Caco-2 (cell line): ENCODE measurements at regions of chr12 and their contacts with region 1.

Region 1: GRCh38 chr12:55073043-55074022 is 52.9 kb upstream of the OR9K2 start:
- DNase-seq: peak; percentile 58 to 69
- H3K4me3 ChIP-seq: no peak overlapping the region
- H3K4me3 Mint-ChIP-seq: no peak overlapping the region
- H3K27ac Mint-ChIP-seq: no peak overlapping the region
- H3K4me1 ChIP-seq: no peaks in the 10 kb centered on the region
- H3K4me1 Mint-ChIP-seq: no peaks in the 10 kb centered on the region
- H3K27me3 ChIP-seq: no peaks in the 10 kb centered on the region
- H3K27me3 Mint-ChIP-seq: peaks cover 10% of the 10 kb centered on the region
- CTCF ChIP-seq: peak; percentile 68 to 75

Region 2: GRCh38 chr12:54661048-54661447 is 412.3 kb before region 1 on chr12:
- CTCF ChIA-PET with region 1: no interaction called
- POLR2A ChIA-PET with region 1: no interaction called
- intact Hi-C with region 1: no loop called
- DNase-seq: no peak
- H3K4me3 ChIP-seq: no peak overlapping the region
- H3K4me3 Mint-ChIP-seq: no peak overlapping the region
- H3K27ac Mint-ChIP-seq: no peak overlapping the region
- H3K4me1 ChIP-seq: no peaks in the 10 kb centered on the region
- H3K4me1 Mint-ChIP-seq: no peaks in the 10 kb centered on the region
- H3K27me3 ChIP-seq: no peaks in the 10 kb centered on the region; the same call in 1 of the 2 replicates
- H3K27me3 Mint-ChIP-seq: peaks cover 21% of the 10 kb centered on the region
- CTCF ChIP-seq: no peak

Region 3: DNA sequence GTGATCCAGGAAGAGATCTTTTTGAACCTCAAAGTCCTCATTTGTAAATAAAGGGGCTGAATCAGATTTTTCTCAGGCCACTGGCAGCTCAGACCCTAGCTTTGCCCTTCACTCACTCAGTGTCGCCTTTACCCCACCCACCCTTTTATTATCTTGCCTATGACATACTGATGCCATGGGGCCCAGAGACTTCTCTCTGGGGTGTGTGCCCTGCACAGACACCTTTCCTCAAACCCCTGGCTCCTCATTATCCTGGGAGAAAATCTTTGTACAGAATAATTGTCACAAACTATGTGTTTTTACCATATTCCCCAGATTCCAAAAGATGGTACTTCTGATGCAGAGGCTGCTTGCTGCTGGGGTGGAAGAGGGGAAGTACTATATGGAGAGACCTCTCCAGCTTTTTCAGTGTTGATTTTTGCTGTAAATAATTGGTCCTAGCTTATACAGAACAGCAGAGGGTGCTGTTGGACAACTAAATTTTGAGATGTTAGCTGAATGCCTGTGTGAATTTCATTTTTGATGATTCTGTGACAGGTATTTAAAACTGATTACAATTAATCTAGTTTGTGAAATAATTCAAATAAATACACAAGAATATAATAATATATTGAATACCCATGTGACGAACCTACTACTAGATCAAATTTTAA is 371.3 kb before region 1 on chr12:
- CTCF ChIA-PET with region 1: interaction called, 8 read pairs
- POLR2A ChIA-PET with region 1: no interaction called
- intact Hi-C with region 1: loop called (anchors 5 kb)
- DNase-seq: peak in 1 of 2 experiments; percentile 22
- H3K4me3 ChIP-seq: no peak overlapping the region
- H3K4me3 Mint-ChIP-seq: no peak overlapping the region
- H3K27ac Mint-ChIP-seq: no peak overlapping the region
- H3K4me1 ChIP-seq: peaks cover 8% of the 10 kb centered on the region; the same call in 1 of the 2 replicates
- H3K4me1 Mint-ChIP-seq: peaks cover 8% of the 10 kb centered on the region
- H3K27me3 ChIP-seq: no peaks in the 10 kb centered on the region
- H3K27me3 Mint-ChIP-seq: peaks cover 5% of the 10 kb centered on the region
- CTCF ChIP-seq: peak in 1 of 2 experiments; percentile 59

Region 4: DNA sequence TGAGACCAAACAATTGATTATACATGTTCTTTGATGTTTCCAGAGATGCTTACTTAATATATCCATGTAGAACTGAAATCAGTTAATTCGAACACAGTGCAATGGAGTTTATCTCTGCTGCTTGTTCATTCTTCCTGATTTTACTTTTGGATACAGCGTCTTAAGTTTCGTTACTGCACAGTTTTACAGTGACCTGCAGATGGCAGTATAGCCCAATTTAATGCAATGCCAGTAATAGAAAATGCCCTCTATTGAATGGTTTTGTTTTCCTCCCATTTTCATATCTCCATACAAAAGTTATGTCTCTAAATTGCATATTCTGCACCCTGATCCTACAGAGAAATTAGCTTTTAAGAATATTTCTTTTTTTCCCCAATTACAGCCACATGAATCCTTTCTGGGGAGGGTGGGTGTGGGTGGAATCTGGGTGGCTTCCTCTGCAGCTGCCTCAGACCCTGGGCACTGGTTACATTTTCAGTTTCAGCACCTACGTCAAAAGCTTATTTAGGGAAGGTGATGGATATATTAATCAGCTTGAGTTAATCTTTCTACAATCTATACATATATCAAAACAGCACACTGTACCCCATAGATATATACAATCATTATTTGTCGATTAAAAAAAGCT is 324.0 kb before region 1 on chr12:
- CTCF ChIA-PET with region 1: no interaction called
- POLR2A ChIA-PET with region 1: no interaction called
- intact Hi-C with region 1: loop called (anchors 1 kb)
- DNase-seq: peak in 1 of 2 experiments; percentile 44
- H3K4me3 ChIP-seq: no peak overlapping the region
- H3K4me3 Mint-ChIP-seq: no peak overlapping the region
- H3K27ac Mint-ChIP-seq: no peak overlapping the region
- H3K4me1 ChIP-seq: no peaks in the 10 kb centered on the region
- H3K4me1 Mint-ChIP-seq: no peaks in the 10 kb centered on the region
- H3K27me3 ChIP-seq: no peaks in the 10 kb centered on the region
- H3K27me3 Mint-ChIP-seq: peaks cover 6% of the 10 kb centered on the region
- CTCF ChIP-seq: peak; percentile 36 to 58

Region 5: DNA sequence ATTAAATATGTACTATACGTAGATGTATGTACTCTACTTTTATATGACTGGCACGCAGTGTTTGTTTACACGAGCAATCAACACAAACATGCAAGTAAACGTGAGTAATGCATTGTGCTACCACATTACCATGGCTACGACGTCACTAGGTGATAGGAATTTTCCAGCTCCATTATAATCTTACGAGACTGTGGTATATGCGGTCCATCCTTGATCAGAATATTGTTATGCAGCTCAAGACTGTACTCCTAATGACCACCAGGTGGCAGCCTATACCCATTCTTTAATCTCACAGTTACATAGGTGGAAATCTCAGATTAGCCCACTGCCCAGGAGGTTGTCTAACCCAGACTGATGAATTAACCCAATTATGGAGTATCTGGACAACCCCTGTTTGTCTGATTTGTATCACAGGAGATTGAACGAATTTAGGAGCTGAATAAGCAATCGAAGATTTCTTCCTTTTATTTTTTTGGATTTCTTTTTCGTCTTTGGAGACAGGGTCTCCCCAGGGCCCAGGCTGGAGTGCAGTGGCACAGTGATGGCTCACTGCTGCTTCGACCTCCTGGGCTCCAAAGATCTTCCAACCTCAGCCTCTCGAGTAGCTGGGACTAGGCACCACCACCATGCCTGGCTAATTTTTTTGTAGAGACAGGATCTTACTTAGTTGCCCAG is 80.0 kb before region 1 on chr12:
- CTCF ChIA-PET with region 1: interaction called, 30 read pairs
- POLR2A ChIA-PET with region 1: no interaction called
- intact Hi-C with region 1: loop called (anchors 1 kb)
- DNase-seq: peak; percentile 47 to 55
- H3K4me3 ChIP-seq: no peak overlapping the region
- H3K4me3 Mint-ChIP-seq: no peak overlapping the region
- H3K27ac Mint-ChIP-seq: no peak overlapping the region
- H3K4me1 ChIP-seq: no peaks in the 10 kb centered on the region
- H3K4me1 Mint-ChIP-seq: no peaks in the 10 kb centered on the region
- H3K27me3 ChIP-seq: no peaks in the 10 kb centered on the region; the same call in 1 of the 2 replicates
- H3K27me3 Mint-ChIP-seq: peaks cover 25% of the 10 kb centered on the region
- CTCF ChIP-seq: peak; percentile 69

Region 6: GRCh38 chr12:55116152-55116551 is 42.8 kb after region 1 on chr12:
- CTCF ChIA-PET with region 1: no interaction called
- POLR2A ChIA-PET with region 1: no interaction called
- intact Hi-C with region 1: no loop called
- DNase-seq: no peak
- H3K4me3 ChIP-seq: no peak overlapping the region
- H3K4me3 Mint-ChIP-seq: no peak overlapping the region
- H3K27ac Mint-ChIP-seq: no peak overlapping the region
- H3K4me1 ChIP-seq: no peaks in the 10 kb centered on the region
- H3K4me1 Mint-ChIP-seq: no peaks in the 10 kb centered on the region
- H3K27me3 ChIP-seq: no peaks in the 10 kb centered on the region
- H3K27me3 Mint-ChIP-seq: peaks cover 13% of the 10 kb centered on the region
- CTCF ChIP-seq: no peak

Region 7: DNA sequence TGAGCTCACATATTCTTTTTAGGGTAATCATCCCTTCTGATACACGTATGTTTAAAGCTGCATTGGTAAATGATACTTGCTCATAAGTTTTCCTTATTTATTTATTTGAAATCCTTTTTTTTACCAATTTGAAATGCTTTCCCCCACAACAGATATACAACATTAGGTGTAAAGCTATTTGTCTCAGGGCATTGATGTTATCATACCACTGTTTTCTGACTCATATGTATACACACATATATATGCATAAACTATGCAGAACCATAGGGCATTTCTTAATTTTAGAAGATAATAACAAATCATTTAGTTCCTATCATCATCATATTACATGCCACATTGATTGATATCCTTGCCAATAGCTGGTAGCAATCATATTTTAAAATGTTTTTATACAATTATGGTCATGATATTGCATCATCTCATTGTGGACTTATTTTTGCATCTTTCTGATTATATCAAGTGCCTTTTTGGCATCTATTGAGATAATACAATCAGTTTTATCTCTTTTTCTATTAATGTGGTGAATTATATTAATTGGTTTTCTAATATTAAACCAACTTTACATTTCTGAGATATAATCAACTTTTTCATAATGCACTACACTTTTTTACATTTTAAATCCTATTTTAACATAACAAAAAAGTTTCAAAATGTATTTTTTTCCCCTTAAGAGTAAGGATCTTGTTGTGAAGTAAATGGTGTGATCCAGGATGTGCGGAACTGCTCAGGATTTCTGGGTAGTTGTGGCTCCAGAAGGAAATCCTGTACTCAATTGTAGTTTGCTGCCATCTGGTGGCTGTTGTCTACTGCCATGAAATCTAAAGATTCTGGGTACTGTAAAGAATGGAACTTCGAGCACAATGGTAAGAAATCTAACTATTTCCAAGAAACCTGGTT is 69.6 kb after region 1 on chr12:
- CTCF ChIA-PET with region 1: no interaction called
- POLR2A ChIA-PET with region 1: no interaction called
- intact Hi-C with region 1: loop called (anchors 1 kb)
- DNase-seq: peak; percentile 51 to 59
- H3K4me3 ChIP-seq: no peak overlapping the region
- H3K4me3 Mint-ChIP-seq: no peak overlapping the region
- H3K27ac Mint-ChIP-seq: no peak overlapping the region
- H3K4me1 ChIP-seq: no peaks in the 10 kb centered on the region
- H3K4me1 Mint-ChIP-seq: no peaks in the 10 kb centered on the region
- H3K27me3 ChIP-seq: no peaks in the 10 kb centered on the region; the same call in 1 of the 2 replicates
- H3K27me3 Mint-ChIP-seq: peaks cover 4% of the 10 kb centered on the region
- CTCF ChIP-seq: peak; percentile 56 to 78